Sciatic nerve (tissue), 2 donors: ENCODE measurements at regions of chr12 and their contacts with region 1.

Region 1: DNA sequence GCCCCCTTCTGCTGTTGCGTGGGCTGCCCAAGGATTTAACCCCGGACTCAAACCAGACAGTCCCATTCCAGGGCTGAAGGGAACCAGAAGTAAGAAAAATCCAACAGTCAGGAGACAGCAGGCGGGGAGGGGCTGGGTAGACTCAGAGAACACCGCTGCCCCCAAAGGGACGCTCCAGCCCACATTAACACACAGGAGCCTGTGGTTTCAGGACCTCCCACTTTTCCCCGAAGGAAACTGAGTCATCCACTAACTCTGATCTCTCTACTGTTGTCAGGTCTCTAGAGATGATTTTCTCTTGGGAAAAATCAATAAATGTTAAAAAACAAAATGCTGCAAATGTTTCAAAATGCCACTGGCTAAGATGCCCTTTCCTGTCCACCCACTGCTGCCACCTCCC is 41.6 kb downstream of the FBXO21 start:
- DNase-seq: no peak
- ATAC-seq: no peak

Region 2: GRCh38 chr12:116794725-116795124 is 353.9 kb before region 1 on chr12:
- intact Hi-C with region 1: loop called (anchors 5 kb)
- DNase-seq: no peak
- ATAC-seq: no peak